Heart right ventricle (tissue), 16 donors: ENCODE measurements at regions of chr2 and their contacts with region 1.

Region 1: DNA sequence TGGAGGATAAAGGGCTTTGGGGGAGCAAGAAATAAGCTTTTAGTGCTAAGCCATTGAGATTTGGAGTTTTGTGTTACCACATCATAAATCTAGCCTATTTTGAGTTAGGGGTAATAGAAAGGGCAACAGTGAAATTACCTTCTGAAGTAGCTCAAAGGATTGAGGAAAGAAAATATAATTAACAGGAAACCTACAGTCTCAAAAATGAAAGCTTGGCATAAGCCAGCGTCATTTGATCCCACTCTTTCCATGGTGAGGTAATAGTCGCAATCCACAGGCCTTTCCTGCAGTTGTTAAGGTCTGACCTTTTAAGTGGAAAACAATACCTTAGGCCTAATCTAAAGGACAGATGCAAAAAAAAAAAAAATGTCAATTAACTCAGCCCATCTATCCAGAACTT is 182.7 kb downstream of the UXS1 start:
- DNase-seq: peak in 1 of 2 donors; percentile 38
- ATAC-seq: peak in 7 of 8 donors; percentile 56 to 96 (median 87)
- H3K4me3 ChIP-seq: no peak overlapping the region
- H3K27ac ChIP-seq: peak overlapping the region in 9 of 10 donors; percentile 38 to 87 (median 74)
- H3K4me1 ChIP-seq: peaks cover 0 to 27% (median 6%) of the 10 kb centered on the region in 9 donors
- H3K27me3 ChIP-seq: no peaks in the 10 kb centered on the region
- CTCF ChIP-seq: no peak

Region 2: GRCh38 chr2:105929516-105929915 is 81.9 kb before region 1 on chr2:
- intact Hi-C with region 1: loop called in 1 of 10 experiments (anchors 5 kb)
- DNase-seq: no peak
- ATAC-seq: no peak
- H3K4me3 ChIP-seq: no peak overlapping the region
- H3K27ac ChIP-seq: no peak overlapping the region
- H3K4me1 ChIP-seq: peaks cover 0 to 47% (median 26%) of the 10 kb centered on the region in 9 donors
- H3K27me3 ChIP-seq: no peaks in the 10 kb centered on the region
- CTCF ChIP-seq: no peak